Posterior vena cava (tissue), 2 donors: ENCODE measurements at regions of chr9 and their contacts with region 1.

Region 1: GRCh38 chr9:33167046-33167808 is at the start of gene B4GALT1:
- DNase-seq: peak; percentile 99
- total RNA-seq, gene B4GALT1: 76.8 to 107 TPM

Region 2: DNA sequence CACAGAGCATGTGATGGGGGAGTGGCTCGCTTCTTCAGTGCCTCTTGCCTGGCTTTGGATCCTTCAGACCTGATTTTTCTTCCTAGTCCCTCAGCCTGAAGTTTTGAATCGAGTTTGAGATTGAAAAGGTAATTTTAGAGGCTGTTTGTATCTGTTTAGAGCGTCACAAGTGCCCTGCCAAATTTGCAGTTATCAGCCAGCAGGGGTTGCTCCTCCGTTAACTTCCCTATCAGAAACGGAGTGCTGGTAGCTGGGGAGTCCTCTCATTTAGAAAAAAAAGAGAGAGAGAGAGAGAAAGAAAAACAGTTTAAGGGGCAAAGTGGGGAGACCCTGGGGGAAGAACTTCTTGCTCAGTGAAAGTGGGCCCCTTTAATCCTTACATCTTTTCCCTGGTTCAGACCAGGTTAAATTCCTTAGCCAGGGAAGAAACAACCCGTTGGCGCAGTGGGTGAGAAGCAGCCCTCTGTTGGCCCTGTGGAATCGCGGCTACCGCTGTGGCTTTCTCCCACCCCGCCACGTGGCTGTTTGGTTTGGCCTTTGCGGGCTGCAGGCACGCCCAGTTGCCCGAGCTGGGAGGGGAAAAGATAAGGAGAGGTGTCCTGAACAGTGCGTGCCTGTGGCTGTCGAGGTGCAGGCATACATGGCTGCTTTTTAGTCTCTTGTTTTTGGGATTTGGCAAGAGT is 1359.5 kb before region 1 on chr9:
- intact Hi-C with region 1: no loop called
- DNase-seq: no peak

Region 3: GRCh38 chr9:33082538-33083326 is 84.5 kb before region 1 on chr9:
- intact Hi-C with region 1: no loop called
- DNase-seq: no peak

Region 4: GRCh38 chr9:33106827-33107621 is 60.2 kb before region 1 on chr9:
- intact Hi-C with region 1: loop called in 1 of 2 experiments (anchors 10 kb)
- DNase-seq: peak; percentile 88

Region 5: DNA sequence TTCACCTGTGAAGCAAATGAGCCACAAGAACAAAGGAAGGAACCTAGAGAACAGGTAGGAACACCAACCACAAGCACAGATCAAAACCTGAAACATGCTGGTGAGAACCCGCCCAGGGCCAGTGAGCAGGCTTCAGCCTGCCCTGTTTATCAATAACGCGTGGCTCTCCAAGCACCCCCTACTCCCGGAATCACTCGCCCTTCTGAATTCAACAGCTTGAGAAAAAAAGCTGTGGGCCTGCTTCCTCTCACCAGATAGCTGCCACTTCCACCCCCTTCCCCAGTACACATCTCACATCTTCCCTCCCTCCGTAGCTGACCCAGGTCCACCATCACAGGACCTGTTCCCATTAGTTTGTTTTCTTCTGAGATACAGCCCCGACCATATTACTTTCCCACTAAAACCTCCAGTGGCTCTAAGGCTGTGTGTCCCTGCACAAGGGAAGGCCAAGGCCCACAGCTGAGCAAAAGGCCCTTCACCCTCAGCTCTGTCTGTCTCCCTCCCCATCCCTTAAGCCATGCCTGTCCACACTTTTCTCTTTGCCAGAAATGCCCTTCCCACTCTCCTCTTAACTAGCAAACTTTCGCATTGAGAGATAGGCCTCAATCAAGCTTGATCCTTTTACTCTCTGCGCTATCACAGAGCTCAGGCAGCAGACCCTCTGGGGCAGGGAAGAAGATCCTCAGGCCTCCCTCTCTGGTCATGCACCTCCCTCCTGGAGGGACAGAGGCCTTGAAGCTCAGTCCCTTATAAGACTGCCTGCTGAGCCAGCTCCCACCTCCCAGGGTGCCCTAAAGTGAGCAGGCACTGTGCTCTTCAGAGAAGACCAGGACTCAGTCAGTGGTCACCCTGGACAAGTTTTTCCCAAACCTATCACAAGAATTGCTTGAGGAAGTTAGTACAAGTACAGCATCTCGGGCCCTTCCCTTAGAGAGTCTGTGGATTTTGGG is 30.2 kb before region 1 on chr9:
- intact Hi-C with region 1: no loop called
- DNase-seq: peak; percentile 41

Region 6: DNA sequence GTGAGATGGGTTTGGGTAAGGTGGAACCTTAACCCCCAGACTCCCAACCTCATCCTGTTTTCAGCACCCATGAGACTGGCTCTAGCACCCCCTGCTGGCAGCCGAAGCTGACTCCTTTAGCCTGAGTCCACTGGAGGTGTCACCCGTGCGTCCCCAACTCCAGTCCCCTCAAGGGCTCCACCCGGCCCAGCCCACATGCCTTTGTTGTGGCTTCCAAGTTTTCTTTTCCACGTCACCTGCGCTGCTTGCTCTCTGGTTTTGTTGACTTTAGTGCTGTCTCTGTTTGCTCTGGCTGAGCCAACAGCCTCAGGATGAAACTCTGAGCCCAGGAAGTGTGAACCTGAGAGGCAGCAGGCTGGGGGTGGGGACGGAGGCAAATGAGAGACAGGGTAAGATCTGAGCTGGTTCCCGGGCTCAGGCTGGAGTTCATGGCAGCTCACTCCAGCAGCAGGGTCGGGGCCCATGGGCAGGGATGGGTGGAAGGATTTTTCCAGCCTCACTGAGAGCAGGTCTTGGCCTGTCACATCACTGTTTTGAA is 248.3 kb after region 1 on chr9:
- intact Hi-C with region 1: no loop called
- DNase-seq: peak; percentile 89